ENCODE measurements at regions of chr16 and their contacts with region 1.

Region 1: GRCh38 chr16:49608779-49609178 is 235.2 kb downstream of the C16orf78 start:
- DNase-seq: peak in 2 of 5 donors; percentile 22 to 40
- H3K4me3 ChIP-seq: no peak overlapping the region
- H3K27ac ChIP-seq: no peak overlapping the region
- H3K4me1 ChIP-seq: no peaks in the 10 kb centered on the region
- H3K27me3 ChIP-seq: no peaks in the 10 kb centered on the region
- CTCF ChIP-seq: peak in 1 of 3 donors; percentile 27
- EP300 ChIP-seq: no peak
- POLR2A ChIP-seq: no peak

Region 2: DNA sequence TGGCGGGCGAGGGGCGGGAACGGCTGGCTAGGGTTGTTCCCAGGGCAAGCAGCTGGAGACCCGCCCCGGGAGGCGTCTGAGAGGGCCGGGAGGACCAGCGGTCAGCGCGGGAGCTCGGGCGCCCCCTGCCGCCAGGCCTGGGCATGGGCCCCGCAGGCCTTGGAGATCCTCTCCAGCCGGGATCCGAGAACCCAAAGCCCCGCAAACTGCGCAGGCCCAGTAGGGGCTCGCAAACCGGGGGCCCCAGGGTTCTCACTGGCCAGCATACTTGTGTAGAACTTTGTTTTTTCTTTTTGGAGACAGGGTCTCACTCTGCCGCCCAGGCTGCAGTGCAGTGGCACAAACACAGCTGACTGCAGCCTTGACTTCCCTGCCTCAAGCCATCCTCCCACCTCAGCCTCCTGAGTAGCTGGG is 267.9 kb after region 1 on chr16:
- intact Hi-C with region 1: loop called in 1 of 4 experiments (anchors 10 kb)
- DNase-seq: peak; percentile 60 to 83 (median 72)
- H3K4me3 ChIP-seq: peak overlapping the region; percentile 8
- H3K27ac ChIP-seq: peak overlapping the region in 1 of 2 donors; percentile 12
- H3K4me1 ChIP-seq: no peaks in the 10 kb centered on the region
- H3K27me3 ChIP-seq: no peaks in the 10 kb centered on the region
- CTCF ChIP-seq: peak; percentile 50 to 70 (median 63)
- EP300 ChIP-seq: no peak
- POLR2A ChIP-seq: no peak